ENCODE measurements at regions of chr10 and their contacts with region 1.

Region 1: GRCh38 chr10:132452631-132453469 is 55.9 kb downstream of the PWWP2B start:
- DNase-seq: peak; percentile 88
- ATAC-seq: peak; percentile 82
- H3K4me3 Mint-ChIP-seq: peak overlapping the region; percentile 18
- H3K27ac Mint-ChIP-seq: peak overlapping the region; percentile 57
- H3K4me1 Mint-ChIP-seq: peaks cover 22% of the 10 kb centered on the region
- H3K27me3 Mint-ChIP-seq: no peaks in the 10 kb centered on the region
- CTCF ChIP-seq: peak; percentile 95

Region 2: GRCh38 chr10:132223156-132223590 is 229.7 kb before region 1 on chr10:
- CTCF ChIA-PET with region 1: no interaction called
- POLR2A ChIA-PET with region 1: no interaction called
- intact Hi-C with region 1: loop called (anchors 10 kb)
- DNase-seq: peak; percentile 82
- ATAC-seq: peak; percentile 98
- H3K4me3 Mint-ChIP-seq: no peak overlapping the region
- H3K27ac Mint-ChIP-seq: no peak overlapping the region
- H3K4me1 Mint-ChIP-seq: peaks cover 4% of the 10 kb centered on the region
- H3K27me3 Mint-ChIP-seq: no peaks in the 10 kb centered on the region
- CTCF ChIP-seq: peak; percentile 93

Region 3: DNA sequence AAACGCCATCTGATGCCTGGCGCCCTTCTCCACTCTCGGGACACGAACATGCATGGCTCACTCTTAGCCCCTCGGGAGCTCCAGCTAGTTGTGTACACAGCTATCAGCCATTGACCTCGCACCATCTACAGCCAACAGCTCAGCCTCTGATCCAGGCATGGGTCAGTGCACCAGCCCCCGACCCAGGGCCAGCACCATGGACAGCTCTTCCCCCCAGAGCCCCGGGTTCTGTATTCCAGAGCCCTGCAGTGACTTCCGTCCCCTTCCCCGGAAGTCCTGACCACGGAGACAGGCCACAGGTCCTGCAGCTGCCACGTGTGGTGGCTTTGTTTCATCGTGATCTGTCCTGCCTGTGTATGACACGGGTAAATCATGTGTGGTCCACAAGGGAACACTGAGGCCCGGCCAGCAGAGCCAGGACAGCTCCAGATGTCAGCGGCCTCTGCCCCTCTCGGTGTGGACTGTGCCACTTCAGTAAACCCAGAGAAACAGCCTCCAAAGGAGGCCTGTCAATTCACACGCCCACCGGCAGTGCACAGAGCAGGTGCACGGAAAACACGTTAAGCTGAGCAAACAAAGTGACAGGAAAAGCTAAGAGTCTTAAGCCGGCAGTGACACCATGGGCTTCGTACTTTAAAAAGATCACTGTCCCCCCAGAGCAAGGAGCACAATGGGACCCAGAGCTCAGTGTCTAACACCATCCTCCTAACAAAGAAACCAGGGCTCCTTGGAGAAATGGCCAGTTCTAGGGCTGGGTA is 158.1 kb before region 1 on chr10:
- CTCF ChIA-PET with region 1: no interaction called
- POLR2A ChIA-PET with region 1: no interaction called
- intact Hi-C with region 1: no loop called
- DNase-seq: no peak
- ATAC-seq: no peak
- H3K4me3 Mint-ChIP-seq: no peak overlapping the region
- H3K27ac Mint-ChIP-seq: no peak overlapping the region
- H3K4me1 Mint-ChIP-seq: peaks cover 7% of the 10 kb centered on the region
- H3K27me3 Mint-ChIP-seq: no peaks in the 10 kb centered on the region
- CTCF ChIP-seq: no peak

Region 4: GRCh38 chr10:132387764-132388210 is 65.1 kb before region 1 on chr10:
- CTCF ChIA-PET with region 1: no interaction called
- POLR2A ChIA-PET with region 1: no interaction called
- intact Hi-C with region 1: loop called (anchors 5 kb)
- DNase-seq: peak; percentile 86
- ATAC-seq: peak; percentile 76
- H3K4me3 Mint-ChIP-seq: peak overlapping the region; percentile 62
- H3K27ac Mint-ChIP-seq: peak overlapping the region; percentile 81
- H3K4me1 Mint-ChIP-seq: peaks cover 6% of the 10 kb centered on the region
- H3K27me3 Mint-ChIP-seq: no peaks in the 10 kb centered on the region
- CTCF ChIP-seq: peak; percentile 38

Region 5: DNA sequence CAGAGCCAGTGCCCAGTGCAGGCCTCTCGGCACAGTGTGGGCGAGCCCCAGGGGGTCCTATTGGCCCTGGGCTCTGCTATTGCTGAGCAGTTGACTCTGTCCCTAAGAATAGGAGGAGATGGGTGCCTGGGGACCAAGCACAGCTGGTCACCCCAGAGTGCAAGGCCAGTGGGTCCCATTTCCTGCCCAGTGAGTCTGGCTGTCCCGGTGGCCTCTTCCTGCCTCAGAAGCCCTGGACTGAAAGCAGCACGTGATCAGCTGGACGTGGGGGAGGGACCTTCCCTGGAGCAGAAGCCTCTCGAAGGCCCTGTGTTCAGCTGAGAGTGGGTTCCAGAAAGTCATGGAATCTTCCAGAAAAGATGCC is 13.8 kb before region 1 on chr10:
- CTCF ChIA-PET with region 1: no interaction called
- POLR2A ChIA-PET with region 1: no interaction called
- intact Hi-C with region 1: no loop called
- DNase-seq: no peak
- ATAC-seq: no peak
- H3K4me3 Mint-ChIP-seq: no peak overlapping the region
- H3K27ac Mint-ChIP-seq: no peak overlapping the region
- H3K4me1 Mint-ChIP-seq: peaks cover 10% of the 10 kb centered on the region
- H3K27me3 Mint-ChIP-seq: no peaks in the 10 kb centered on the region
- CTCF ChIP-seq: no peak